PC-3 (cell line): ENCODE measurements at regions of chr12 and their contacts with region 1.

Region 1: DNA sequence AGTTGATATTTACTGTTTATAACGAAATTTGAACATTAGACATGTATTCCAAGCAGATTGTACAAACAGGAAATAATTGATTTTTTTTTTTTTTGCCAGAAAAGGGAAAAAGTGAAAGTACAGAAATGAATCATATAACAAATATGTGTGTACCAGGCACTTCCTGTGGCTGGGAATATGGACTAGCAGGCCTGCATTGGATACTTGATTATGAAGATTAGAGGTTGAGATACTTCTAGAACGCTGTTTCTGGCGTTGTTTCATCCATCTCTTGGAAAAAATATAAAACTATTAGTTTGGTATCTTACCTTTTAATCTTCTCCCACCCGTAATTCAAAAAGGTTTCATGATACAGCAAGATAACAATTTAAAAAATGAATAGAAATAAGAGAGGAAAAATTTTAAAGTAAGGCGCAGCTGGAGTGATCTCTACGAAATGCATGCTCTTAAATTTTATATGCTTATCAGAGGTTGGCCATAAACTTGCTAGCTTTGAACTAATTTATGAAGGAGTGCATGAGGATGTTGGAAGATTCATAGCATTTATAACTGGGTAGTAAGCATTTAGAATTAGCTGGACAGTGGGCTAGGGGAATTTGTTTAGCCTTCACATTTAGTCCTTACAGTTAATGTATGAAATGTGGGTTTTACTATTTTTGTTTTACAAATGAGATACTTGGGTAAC is 90.8 kb downstream of the AEBP2 start:
- DNase-seq: peak; percentile 19
- ATAC-seq: peak; percentile 50; the same call in 1 of the 2 replicates
- H3K4me3 ChIP-seq: no peak overlapping the region
- H3K27ac ChIP-seq: no peak overlapping the region
- H3K4me1 ChIP-seq: peaks cover 19% of the 10 kb centered on the region
- H3K27me3 ChIP-seq: no peaks in the 10 kb centered on the region
- CTCF ChIP-seq: no peak

Region 2: GRCh38 chr12:19561411-19561961 is 31.4 kb after region 1 on chr12:
- CTCF ChIA-PET with region 1: no interaction called
- POLR2A ChIA-PET with region 1: no interaction called
- intact Hi-C with region 1: loop called (anchors 1 kb)
- DNase-seq: no peak
- ATAC-seq: no peak
- H3K4me3 ChIP-seq: no peak overlapping the region
- H3K27ac ChIP-seq: no peak overlapping the region
- H3K4me1 ChIP-seq: no peaks in the 10 kb centered on the region
- H3K27me3 ChIP-seq: no peaks in the 10 kb centered on the region
- CTCF ChIP-seq: no peak